Gastrocnemius medialis (tissue), 4 donors: ENCODE measurements at regions of chr18 and their contacts with region 1.

Region 1: GRCh38 chr18:35343936-35344735 is at the start of gene ZNF24:
- DNase-seq: peak; percentile 93 to 94
- ATAC-seq: peak; percentile 95
- H3K4me3 ChIP-seq: peak within 1 kb of the TSS; percentile 67 to 100 (median 92)
- H3K27ac ChIP-seq: peak within 1 kb of the TSS; percentile 99 to 100 (median 99)
- H3K4me1 ChIP-seq: peaks cover 48 to 51% of the 10 kb centered on the region in 2 donors
- H3K27me3 ChIP-seq: no peaks in the 10 kb centered on the region
- CTCF ChIP-seq: no peak
- POLR2A ChIP-seq: peak; percentile 79 to 83
- total RNA-seq, gene ZNF24: 30.5 to 50.7 (median 36.3) TPM

Region 2: GRCh38 chr18:35005963-35006577 is 338.1 kb before region 1 on chr18:
- in situ Hi-C with region 1: loop called in 1 of 4 experiments (anchors 10 kb)
- intact Hi-C with region 1: no loop called
- DNase-seq: no peak
- ATAC-seq: peak; percentile 97 to 98
- H3K4me3 ChIP-seq: no peak overlapping the region
- H3K27ac ChIP-seq: peak overlapping the region in 3 of 4 donors; percentile 19 to 36 (median 35)
- H3K4me1 ChIP-seq: peaks cover 7 to 8% of the 10 kb centered on the region in 2 donors
- H3K27me3 ChIP-seq: no peaks in the 10 kb centered on the region
- CTCF ChIP-seq: peak; percentile 51 to 80 (median 66)
- POLR2A ChIP-seq: no peak

Region 3: DNA sequence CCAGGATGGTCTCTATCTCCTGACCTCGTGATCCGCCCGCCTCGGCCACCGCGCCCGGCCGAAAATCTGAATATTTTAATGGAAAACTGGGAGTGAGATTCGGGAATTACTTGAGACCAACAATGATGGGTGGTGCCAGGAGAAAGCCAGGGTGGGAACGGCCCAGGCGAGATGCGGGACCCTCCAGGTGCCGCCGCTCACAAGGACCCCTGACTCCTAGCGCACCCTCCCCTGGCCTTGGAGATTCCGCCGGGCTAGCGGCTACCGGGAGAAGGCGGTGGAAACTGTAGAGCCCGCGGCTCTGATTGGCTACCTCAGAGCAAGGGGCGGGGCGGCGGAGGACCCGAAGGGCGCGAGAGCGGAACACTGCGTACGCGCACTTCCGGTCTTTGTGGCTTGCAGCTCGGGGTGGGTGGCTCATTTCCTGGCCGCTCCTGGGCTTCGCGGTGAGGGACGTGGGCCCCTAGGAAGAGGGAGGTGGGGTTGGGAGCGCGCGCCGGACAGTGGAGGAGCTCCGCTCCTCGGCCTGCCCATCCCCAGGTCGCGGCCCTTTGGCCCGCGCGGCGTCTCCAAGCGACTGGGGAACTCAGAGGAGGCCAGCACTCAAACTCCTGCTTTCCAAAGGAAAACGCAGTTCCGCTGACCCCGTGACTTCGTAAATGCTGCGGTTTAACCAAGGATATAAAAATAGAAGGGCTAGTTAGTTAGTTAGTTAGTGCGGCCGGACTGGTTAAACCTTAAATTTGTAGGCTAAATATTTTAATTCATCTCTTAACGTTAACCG is 103.3 kb before region 1 on chr18 and contains the start of gene ZNF397:
- in situ Hi-C with region 1: no loop called
- intact Hi-C with region 1: loop called (anchors 1 kb)
- DNase-seq: peak; percentile 96 to 97
- ATAC-seq: peak; percentile 99
- H3K4me3 ChIP-seq: peak within 1 kb of the TSS; percentile 79 to 95 (median 86)
- H3K27ac ChIP-seq: peak within 1 kb of the TSS; percentile 92 to 100 (median 96)
- H3K4me1 ChIP-seq: peaks cover 10 to 15% of the 10 kb centered on the region in 2 donors
- H3K27me3 ChIP-seq: no peaks in the 10 kb centered on the region
- CTCF ChIP-seq: peak in 1 of 5 experiments; percentile 16
- POLR2A ChIP-seq: peak; percentile 95 to 96
- total RNA-seq, gene ZNF397: 12.3 to 23.4 (median 14.7) TPM

Region 4: DNA sequence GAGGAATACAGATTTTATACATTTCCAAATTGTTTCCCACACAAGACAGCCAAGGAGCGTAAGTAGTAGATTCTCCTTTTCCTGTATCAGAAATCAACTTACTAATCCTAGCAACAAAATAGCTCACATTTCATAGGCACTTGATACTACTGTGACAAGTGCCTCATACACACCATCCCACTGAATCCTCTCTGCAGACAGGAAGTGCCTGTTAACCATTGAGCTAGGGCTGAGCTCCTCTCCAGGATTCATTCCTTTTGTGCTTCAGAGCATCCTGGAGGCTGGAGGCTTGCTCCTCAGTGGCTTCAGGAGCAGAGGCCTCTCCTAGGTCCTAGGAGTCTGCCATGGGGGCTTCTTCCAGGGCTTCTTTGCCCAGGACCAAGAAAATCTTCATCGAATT is 53.8 kb after region 1 on chr18:
- in situ Hi-C with region 1: no loop called
- intact Hi-C with region 1: no loop called
- DNase-seq: no peak
- ATAC-seq: no peak
- H3K4me3 ChIP-seq: no peak overlapping the region
- H3K27ac ChIP-seq: no peak overlapping the region
- H3K4me1 ChIP-seq: no peaks in the 10 kb centered on the region
- H3K27me3 ChIP-seq: no peaks in the 10 kb centered on the region
- CTCF ChIP-seq: no peak
- POLR2A ChIP-seq: no peak

Region 5: DNA sequence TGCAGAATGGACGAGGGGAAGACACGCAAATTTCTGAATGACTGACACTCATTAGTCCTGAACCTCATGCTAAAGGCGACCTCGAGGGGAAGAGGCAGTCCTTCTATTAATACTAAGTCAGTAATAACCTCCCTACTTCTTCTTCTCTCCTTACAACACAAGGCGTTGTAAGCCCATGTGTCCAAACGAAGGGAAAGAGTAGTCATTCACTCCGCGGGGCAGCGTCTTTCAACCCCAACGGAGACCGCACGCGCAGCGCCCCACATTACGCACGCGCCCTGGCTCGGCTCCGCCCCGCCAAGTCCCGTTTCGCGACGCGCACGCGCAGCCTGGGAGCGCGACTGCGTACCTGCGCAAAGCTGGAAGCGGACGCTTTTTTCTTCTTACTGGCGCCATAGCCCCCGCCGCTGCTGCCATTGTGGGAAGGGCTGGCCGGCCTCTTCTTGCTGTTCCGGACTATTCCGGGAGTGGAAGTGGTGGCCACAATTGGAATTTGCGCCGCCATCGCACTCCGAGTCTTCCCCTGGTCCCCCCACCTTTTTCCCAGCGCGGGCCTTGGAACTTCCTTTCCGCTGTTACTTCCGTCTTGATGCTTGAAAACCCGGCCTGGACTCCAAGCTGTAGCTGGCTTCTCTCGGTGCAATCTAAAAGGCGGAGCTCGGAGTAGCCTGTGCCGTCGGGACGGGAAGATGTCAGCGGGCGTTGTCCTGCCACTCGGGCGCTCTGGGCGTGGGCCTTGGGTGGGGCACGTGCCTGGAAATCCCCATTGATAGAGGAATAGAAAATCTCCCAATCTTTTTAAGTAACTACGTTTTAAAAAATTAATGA is 153.4 kb after region 1 on chr18 and contains the start of gene INO80C:
- in situ Hi-C with region 1: no loop called
- intact Hi-C with region 1: loop called (anchors 1 kb)
- DNase-seq: peak; percentile 86 to 89
- ATAC-seq: peak; percentile 98
- H3K4me3 ChIP-seq: peak within 1 kb of the TSS; percentile 73 to 93 (median 82)
- H3K27ac ChIP-seq: peak within 1 kb of the TSS; percentile 93 to 99 (median 94)
- H3K4me1 ChIP-seq: peaks cover 13 to 26% of the 10 kb centered on the region in 2 donors
- H3K27me3 ChIP-seq: no peaks in the 10 kb centered on the region
- CTCF ChIP-seq: peak in 2 of 5 experiments; percentile 29 to 44
- POLR2A ChIP-seq: peak; percentile 79 to 82
- total RNA-seq, gene INO80C: 5.3 to 6.4 (median 5.5) TPM